Right ventricle myocardium inferior (tissue), 1 donor: ENCODE measurements at regions of chr12 and their contacts with region 1.

Region 1: DNA sequence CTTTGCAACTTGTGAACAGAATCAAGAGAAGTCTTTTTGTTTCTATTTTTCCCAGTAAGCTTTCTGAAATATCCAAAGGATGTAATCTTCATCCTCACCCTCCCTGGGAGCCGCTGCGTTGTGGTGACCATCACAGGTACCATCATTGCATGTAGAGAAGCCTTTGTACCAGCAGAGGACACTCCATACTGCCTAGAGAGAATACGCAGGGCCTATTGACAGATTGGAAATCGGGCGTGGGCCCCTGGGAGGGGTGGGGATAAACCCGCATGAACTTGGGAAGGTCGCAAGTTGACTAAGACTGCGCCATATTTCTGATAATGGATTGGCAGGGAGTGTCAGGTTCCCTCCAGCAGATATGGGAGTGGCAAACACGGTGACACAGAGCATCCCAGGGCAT is 12.7 kb downstream of the KRT1 start:
- DNase-seq: no peak
- ATAC-seq: no peak

Region 2: GRCh38 chr12:52865090-52865944 is 197.8 kb after region 1 on chr12:
- intact Hi-C with region 1: loop called (anchors 5 kb)
- DNase-seq: no peak
- ATAC-seq: no peak